WTC11 (cell line): ENCODE measurements at regions of chr7 and their contacts with region 1.

Region 1: DNA sequence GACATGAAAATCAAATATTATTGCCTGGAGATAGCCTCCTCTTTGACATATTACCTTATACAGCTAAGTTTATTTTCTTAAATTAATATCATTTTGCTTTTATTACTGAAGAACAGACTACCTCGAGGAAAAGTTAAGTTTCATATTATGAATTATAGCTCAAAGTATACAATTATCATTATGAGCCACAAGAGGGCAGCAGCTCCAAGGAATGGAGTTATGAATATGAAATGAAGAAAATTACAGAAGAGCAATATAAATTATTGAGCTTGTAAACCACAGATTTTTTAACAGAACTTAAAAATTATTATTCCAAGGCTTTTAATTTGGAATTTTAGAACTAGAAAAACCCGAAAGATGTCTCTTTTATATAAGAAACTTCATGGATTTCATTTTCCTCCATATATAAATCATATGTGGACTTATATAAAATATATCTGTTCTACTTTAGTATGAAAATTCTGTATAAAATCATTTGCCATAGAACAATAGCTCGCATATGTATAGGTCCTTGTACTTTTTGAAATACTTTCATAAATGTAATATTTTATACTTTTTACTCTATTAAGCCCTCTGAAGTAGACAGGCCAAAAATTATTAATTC is 40.1 kb downstream of the IQUB start:
- DNase-seq: no peak
- ATAC-seq: no peak
- H3K4me3 Mint-ChIP-seq: no peak overlapping the region
- H3K27ac Mint-ChIP-seq: no peak overlapping the region
- H3K4me1 Mint-ChIP-seq: peaks cover 7% of the 10 kb centered on the region
- H3K27me3 Mint-ChIP-seq: no peaks in the 10 kb centered on the region
- CTCF ChIP-seq: peak; percentile 58

Region 2: GRCh38 chr7:123528265-123528664 is 34.0 kb after region 1 on chr7:
- CTCF ChIA-PET with region 1: interaction called, 10 read pairs
- POLR2A ChIA-PET with region 1: no interaction called
- DNase-seq: no peak
- ATAC-seq: peak; percentile 38
- H3K4me3 Mint-ChIP-seq: peak overlapping the region; percentile 86
- H3K27ac Mint-ChIP-seq: peak overlapping the region; percentile 94
- H3K4me1 Mint-ChIP-seq: peaks cover 25% of the 10 kb centered on the region
- H3K27me3 Mint-ChIP-seq: peaks cover 4% of the 10 kb centered on the region
- CTCF ChIP-seq: no peak

Region 3: GRCh38 chr7:123534383-123535260 is 40.3 kb after region 1 on chr7 and contains the start of gene IQUB:
- CTCF ChIA-PET with region 1: interaction called, 31 read pairs
- POLR2A ChIA-PET with region 1: no interaction called
- DNase-seq: peak; percentile 98
- ATAC-seq: peak; percentile 88
- H3K4me3 Mint-ChIP-seq: peak within 1 kb of the TSS; percentile 84
- H3K27ac Mint-ChIP-seq: peak within 1 kb of the TSS; percentile 88
- H3K4me1 Mint-ChIP-seq: peaks cover 17% of the 10 kb centered on the region
- H3K27me3 Mint-ChIP-seq: peaks cover 16% of the 10 kb centered on the region
- CTCF ChIP-seq: no peak
- total RNA-seq, gene IQUB: 0.62 to 0.77 TPM (median 0.71 TPM) in 3 replicates

Region 4: DNA sequence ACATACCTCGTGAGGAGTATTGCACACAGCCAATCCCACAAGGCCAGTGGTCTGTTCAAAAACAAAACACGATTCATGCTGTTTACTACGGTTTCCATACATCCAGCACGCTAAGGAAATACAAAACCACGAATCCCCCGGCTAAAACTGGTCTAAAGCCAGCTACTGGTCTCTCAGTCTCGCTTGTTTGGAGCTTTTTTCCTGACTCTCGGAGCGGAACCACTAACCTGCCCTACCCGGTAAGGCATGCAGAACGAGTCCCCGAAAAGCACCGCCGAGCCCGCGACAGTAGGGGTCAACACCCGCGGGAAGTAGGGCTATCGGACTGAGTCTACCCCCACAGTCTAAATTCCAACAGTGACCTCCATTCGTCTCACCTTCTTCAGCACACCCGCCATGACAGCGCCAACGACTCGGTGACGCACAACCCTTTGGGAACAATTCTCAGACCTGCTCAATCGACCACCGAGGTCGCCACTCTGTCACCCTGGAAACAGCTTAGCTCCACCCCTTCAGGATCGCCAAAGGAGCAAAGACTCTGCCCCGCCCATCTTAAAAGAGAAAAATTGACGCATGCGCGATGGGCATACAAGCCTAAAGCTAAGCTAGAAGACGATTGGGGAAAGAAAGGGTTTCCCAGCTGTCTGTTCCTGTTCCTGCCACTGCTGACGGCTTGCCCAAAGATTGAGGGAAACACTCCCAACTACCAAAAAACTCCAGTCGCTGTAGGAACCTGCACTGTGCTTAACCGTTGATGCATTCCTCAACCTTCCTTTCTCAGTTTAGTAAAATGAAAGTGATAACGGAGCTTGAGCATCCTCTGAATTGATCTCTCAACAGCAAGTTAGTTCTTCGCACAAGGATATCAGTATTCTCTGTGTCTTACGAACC is 63.3 kb after region 1 on chr7 and contains the start of gene NDUFA5:
- CTCF ChIA-PET with region 1: interaction called, 17 read pairs
- POLR2A ChIA-PET with region 1: no interaction called
- DNase-seq: peak; percentile 97
- ATAC-seq: peak; percentile 95
- H3K4me3 Mint-ChIP-seq: no peak within 1 kb of the TSS
- H3K27ac Mint-ChIP-seq: no peak within 1 kb of the TSS
- H3K4me1 Mint-ChIP-seq: no peaks in the 10 kb centered on the region; the same call in 1 of the 2 replicates
- H3K27me3 Mint-ChIP-seq: no peaks in the 10 kb centered on the region
- CTCF ChIP-seq: no peak
- total RNA-seq, gene NDUFA5: 69.1 to 77.0 TPM (median 72.9 TPM) in 3 replicates

Region 5: GRCh38 chr7:123573896-123574467 is 79.7 kb after region 1 on chr7:
- CTCF ChIA-PET with region 1: interaction called, 10 read pairs
- POLR2A ChIA-PET with region 1: no interaction called
- DNase-seq: no peak
- ATAC-seq: no peak
- H3K4me3 Mint-ChIP-seq: no peak overlapping the region
- H3K27ac Mint-ChIP-seq: peak overlapping the region; percentile 58; the same call in 1 of the 2 replicates
- H3K4me1 Mint-ChIP-seq: peaks cover 38% of the 10 kb centered on the region
- H3K27me3 Mint-ChIP-seq: no peaks in the 10 kb centered on the region; the same call in 1 of the 2 replicates
- CTCF ChIP-seq: no peak